ENCODE measurements at regions of chr19 and their contacts with region 1.

Region 1: GRCh38 chr19:10245189-10245939 is 6.7 kb upstream of the MRPL4 start:
- DNase-seq: no peak
- H3K4me3 ChIP-seq: no peak overlapping the region
- H3K27ac ChIP-seq: no peak overlapping the region
- H3K4me1 ChIP-seq: peaks cover 6 to 9% (median 7%) of the 10 kb centered on the region in 4 donors
- H3K27me3 ChIP-seq: no peaks in the 10 kb centered on the region
- CTCF ChIP-seq: no peak
- EP300 ChIP-seq: no peak
- POLR2A ChIP-seq: no peak

Region 2: GRCh38 chr19:10194500-10195289 is 50.7 kb before region 1 on chr19 and contains the start of gene DNMT1:
- intact Hi-C with region 1: loop called (anchors 5 kb)
- DNase-seq: peak; percentile 98
- H3K4me3 ChIP-seq: peak within 1 kb of the TSS; percentile 74 to 90 (median 85)
- H3K27ac ChIP-seq: peak within 1 kb of the TSS; percentile 83 to 93 (median 90)
- H3K4me1 ChIP-seq: peaks cover 17 to 36% (median 29%) of the 10 kb centered on the region in 4 donors
- H3K27me3 ChIP-seq: no peaks in the 10 kb centered on the region
- CTCF ChIP-seq: no peak
- EP300 ChIP-seq: no peak
- POLR2A ChIP-seq: peak; percentile 20
- total RNA-seq, gene DNMT1: 20.8 to 51.4 (median 34.8) TPM

Region 3: GRCh38 chr19:10270616-10271394 is 25.4 kb after region 1 on chr19 and contains the start of gene ICAM1:
- intact Hi-C with region 1: no loop called
- DNase-seq: peak; percentile 98
- H3K4me3 ChIP-seq: peak within 1 kb of the TSS; percentile 46 to 59 (median 50)
- H3K27ac ChIP-seq: peak within 1 kb of the TSS; percentile 68 to 88 (median 79)
- H3K4me1 ChIP-seq: peaks cover 32 to 57% (median 37%) of the 10 kb centered on the region in 4 donors
- H3K27me3 ChIP-seq: peaks cover 0 to 39% (median 15%) of the 10 kb centered on the region in 4 donors
- CTCF ChIP-seq: no peak
- EP300 ChIP-seq: peak; percentile 61
- POLR2A ChIP-seq: peak; percentile 59
- total RNA-seq, gene ICAM1: 15.8 to 63.5 (median 18.4) TPM

Measured in esophagus muscularis mucosa (tissue), 4 donors.